ENCODE measurements at regions of chrX and their contacts with region 1.

Region 1: DNA sequence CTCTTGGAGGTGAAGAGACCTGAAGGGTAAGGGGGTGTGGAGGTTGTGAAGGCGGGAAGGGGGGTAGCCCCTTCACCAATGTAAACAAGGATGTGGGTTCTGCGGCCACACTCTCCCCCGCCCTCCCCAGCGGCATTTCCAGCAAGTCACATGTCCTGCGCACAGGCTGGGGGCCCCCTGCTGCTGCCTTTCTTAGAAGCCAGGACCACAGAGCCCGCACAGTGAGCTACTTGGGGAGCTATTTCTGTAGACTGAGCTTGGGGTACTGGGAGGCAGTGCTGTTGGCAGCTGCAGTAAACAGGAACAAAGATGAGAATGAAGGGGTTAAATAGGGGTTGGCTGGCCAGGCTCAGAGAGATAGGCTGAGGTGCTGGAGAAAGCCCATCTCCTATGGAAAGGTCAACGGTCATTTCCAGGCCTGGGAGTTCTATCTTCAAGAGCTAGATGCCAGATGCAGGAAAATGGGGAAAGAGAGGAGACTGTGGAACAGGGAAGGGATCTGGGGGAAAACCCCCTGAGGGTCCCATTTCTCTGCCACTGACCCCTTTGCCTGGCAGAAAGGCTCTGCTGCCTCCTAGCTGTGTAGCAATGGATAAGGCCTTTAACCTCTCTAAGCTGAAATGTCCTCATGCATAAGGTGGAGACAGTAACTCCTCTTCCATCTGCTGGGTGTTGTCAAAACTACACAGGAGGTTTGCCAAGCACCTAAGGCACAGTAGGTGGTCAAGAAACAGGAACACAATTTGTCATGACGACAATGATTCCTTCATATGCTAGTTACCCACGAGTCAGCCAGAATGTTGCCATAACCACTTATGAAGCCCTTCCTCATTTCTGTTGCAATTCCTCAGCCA is 18.5 kb upstream of the PIM2 start:
- DNase-seq: peak; percentile 95
- ATAC-seq: peak; percentile 61
- H3K4me3 Mint-ChIP-seq: peak overlapping the region; percentile 68
- H3K27ac Mint-ChIP-seq: peak overlapping the region; percentile 95
- H3K4me1 Mint-ChIP-seq: peaks cover 79% of the 10 kb centered on the region
- H3K27me3 Mint-ChIP-seq: no peaks in the 10 kb centered on the region
- CTCF ChIP-seq: peak; percentile 41

Region 2: GRCh38 chrX:48801280-48802088 is 135.8 kb before region 1 on chrX and contains the start of gene HDAC6:
- CTCF ChIA-PET with region 1: no interaction called
- POLR2A ChIA-PET with region 1: no interaction called
- intact Hi-C with region 1: loop called (anchors 5 kb)
- DNase-seq: peak; percentile 96
- ATAC-seq: peak; percentile 87
- H3K4me3 Mint-ChIP-seq: peak within 1 kb of the TSS; percentile 94
- H3K27ac Mint-ChIP-seq: peak within 1 kb of the TSS; percentile 99
- H3K4me1 Mint-ChIP-seq: peaks cover 20% of the 10 kb centered on the region
- H3K27me3 Mint-ChIP-seq: no peaks in the 10 kb centered on the region
- CTCF ChIP-seq: no peak
- total RNA-seq, gene HDAC6: 51.2 to 54.5 TPM

Region 3: GRCh38 chrX:48897621-48898306 is 39.5 kb before region 1 on chrX and contains the starts of genes PQBP1 and TIMM17B:
- CTCF ChIA-PET with region 1: interaction called, 6 read pairs
- POLR2A ChIA-PET with region 1: interaction called, 15 read pairs
- intact Hi-C with region 1: no loop called
- DNase-seq: peak; percentile 91
- ATAC-seq: peak; percentile 91
- H3K4me3 Mint-ChIP-seq: peak within 1 kb of the TSS; percentile 84
- H3K27ac Mint-ChIP-seq: peak within 1 kb of the TSS; percentile 96
- H3K4me1 Mint-ChIP-seq: peaks cover 28% of the 10 kb centered on the region
- H3K27me3 Mint-ChIP-seq: no peaks in the 10 kb centered on the region
- CTCF ChIP-seq: no peak
- total RNA-seq, gene PQBP1: 63.9 to 66.5 TPM
- total RNA-seq, gene TIMM17B: 50.1 to 52.2 TPM

Region 4: DNA sequence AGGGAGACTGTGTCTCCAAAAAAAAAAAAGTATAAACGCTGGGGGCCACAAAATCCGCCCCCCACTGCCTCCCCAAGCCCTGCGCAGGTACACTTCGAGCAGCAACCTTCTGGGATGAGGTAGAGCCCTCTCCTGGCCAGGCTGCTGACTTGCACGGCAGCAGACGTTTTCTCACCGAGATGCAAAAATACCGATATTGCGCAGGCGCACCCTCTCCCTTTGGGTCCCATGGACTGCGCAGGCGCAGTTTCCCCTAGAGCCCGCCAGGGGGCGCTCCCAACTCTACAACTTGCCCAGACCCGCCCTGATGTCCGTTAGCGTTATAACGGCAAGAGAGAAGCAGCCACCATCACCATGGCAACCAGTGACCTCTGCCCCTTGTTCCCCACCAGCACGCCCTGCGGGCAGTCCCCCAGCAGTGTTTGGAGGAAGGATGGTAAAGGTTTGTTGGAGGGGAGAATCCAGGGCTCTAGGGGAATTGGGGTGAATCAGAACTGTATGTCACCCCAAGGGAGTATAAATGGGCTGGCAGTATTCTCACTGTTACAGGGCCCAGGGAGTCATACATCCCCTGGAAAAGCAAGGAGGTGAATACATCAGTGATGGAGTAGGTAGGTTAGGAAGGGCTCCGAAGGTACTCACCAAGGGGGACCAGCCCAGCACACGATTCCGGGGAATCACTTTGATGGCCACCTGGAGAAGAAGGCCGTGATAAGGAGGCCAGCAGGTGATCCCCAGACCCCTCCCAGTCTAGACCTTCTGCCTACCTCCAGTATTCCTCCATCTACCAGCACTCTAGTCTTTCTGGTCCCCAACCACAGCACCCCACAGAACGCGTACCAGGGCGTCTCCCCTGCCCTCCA is 19.9 kb before region 1 on chrX:
- CTCF ChIA-PET with region 1: interaction called, 5 read pairs
- POLR2A ChIA-PET with region 1: interaction called, 176 read pairs
- intact Hi-C with region 1: loop called (anchors 1 kb)
- DNase-seq: peak; percentile 94
- ATAC-seq: peak; percentile 46
- H3K4me3 Mint-ChIP-seq: peak overlapping the region; percentile 96
- H3K27ac Mint-ChIP-seq: peak overlapping the region; percentile 98
- H3K4me1 Mint-ChIP-seq: peaks cover 44% of the 10 kb centered on the region
- H3K27me3 Mint-ChIP-seq: no peaks in the 10 kb centered on the region
- CTCF ChIP-seq: peak; percentile 83

Region 5: GRCh38 chrX:48976086-48976485 is 38.8 kb after region 1 on chrX:
- CTCF ChIA-PET with region 1: no interaction called
- POLR2A ChIA-PET with region 1: no interaction called
- intact Hi-C with region 1: no loop called
- DNase-seq: no peak
- ATAC-seq: no peak
- H3K4me3 Mint-ChIP-seq: no peak overlapping the region
- H3K27ac Mint-ChIP-seq: no peak overlapping the region
- H3K4me1 Mint-ChIP-seq: peaks cover 18% of the 10 kb centered on the region
- H3K27me3 Mint-ChIP-seq: no peaks in the 10 kb centered on the region
- CTCF ChIP-seq: no peak

Measured in activated CD8-positive, alpha-beta T cell treated with anti-CD3 and anti-CD28 coated beads for 36 hours (primary cell).